ENCODE measurements at regions of chr16 and their contacts with region 1.

Region 1: GRCh38 chr16:11255737-11256660 is at the start of gene SOCS1:
- DNase-seq: peak; percentile 66
- H3K4me3 ChIP-seq: peak within 1 kb of the TSS; percentile 97
- H3K27ac ChIP-seq: peak within 1 kb of the TSS; percentile 97
- H3K27me3 ChIP-seq: peaks cover 2% of the 10 kb centered on the region
- CTCF ChIP-seq: peak; percentile 64
- polyA plus RNA-seq, gene SOCS1: 11.6 and 21.9 TPM in 2 replicates

Region 2: DNA sequence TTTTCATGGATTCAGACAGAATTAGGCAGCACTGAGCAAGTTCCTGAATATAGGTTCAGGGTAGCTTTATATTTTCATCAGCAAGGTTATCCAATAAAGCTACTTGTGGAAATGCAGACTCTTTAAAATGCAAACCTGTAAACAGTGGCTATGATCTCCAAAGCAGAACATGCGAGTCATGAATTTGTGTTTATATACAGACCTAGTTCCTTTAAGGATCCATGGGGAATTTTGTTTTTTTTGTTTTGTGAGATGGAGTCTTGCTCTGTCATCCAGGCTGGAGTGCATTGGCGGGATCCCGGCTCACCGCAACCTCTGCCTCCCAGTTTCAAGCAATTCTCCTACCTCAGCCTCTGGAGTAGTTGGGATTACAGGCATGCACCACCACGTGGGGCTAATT is 296.8 kb before region 1 on chr16:
- CTCF ChIA-PET with region 1: interaction called, 92 read pairs
- POLR2A ChIA-PET with region 1: interaction called, 39 read pairs
- DNase-seq: no peak
- H3K4me3 ChIP-seq: no peak overlapping the region
- H3K27ac ChIP-seq: peak overlapping the region; percentile 47
- H3K27me3 ChIP-seq: no peaks in the 10 kb centered on the region
- CTCF ChIP-seq: no peak

Region 3: GRCh38 chr16:10982465-10983150 is 273.4 kb before region 1 on chr16:
- CTCF ChIA-PET with region 1: interaction called, 10 read pairs
- POLR2A ChIA-PET with region 1: interaction called, 16 read pairs
- DNase-seq: no peak
- H3K4me3 ChIP-seq: no peak overlapping the region
- H3K27ac ChIP-seq: no peak overlapping the region
- H3K27me3 ChIP-seq: no peaks in the 10 kb centered on the region
- CTCF ChIP-seq: no peak

Region 4: DNA sequence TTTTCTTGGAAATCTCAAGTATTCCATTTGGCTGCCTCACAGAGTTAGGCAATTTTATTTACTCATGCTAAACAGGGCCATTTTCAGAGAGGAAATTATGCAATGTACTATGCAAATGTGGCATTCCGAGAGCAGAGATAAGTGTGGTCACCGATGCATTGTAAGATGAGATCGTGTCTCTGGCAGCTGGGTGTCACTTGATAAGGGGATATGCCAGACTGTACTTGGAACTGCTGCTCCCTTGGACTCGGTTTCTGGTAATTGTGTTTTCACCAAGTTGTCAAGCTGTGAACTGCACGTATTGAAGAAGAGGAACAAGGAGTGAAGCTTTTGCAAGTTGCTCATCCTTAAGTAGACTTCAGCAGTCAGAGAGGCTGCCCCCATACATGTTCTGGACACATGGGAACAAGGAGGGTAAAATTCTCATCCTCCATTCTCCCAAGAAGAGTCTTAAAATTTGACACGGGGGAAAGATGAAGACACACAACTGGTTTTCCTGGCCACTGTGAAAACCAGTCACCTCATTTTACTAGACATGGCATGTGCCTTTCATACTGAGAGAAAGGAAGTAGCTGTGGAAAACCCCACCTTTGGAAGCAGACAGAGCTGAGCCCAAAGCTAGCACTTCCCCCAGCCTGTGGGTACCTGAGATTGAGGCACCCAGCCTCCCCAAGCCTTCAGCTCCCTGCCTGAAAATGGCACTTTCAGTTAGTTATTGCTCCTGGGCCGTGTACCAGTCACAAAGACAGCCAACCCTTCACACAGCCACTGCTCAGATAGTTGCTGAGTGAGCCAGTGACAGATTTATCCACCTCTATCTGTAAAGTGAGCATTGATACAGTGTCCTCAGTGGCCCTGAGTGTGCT is 150.7 kb before region 1 on chr16:
- CTCF ChIA-PET with region 1: interaction called, 12 read pairs
- POLR2A ChIA-PET with region 1: interaction called, 11 read pairs
- DNase-seq: peak; percentile 87
- H3K4me3 ChIP-seq: no peak overlapping the region
- H3K27ac ChIP-seq: peak overlapping the region; percentile 94
- H3K27me3 ChIP-seq: no peaks in the 10 kb centered on the region
- CTCF ChIP-seq: no peak

Region 5: GRCh38 chr16:11224096-11224893 is 31.7 kb before region 1 on chr16:
- CTCF ChIA-PET with region 1: no interaction called
- POLR2A ChIA-PET with region 1: no interaction called
- DNase-seq: no peak
- H3K4me3 ChIP-seq: no peak overlapping the region
- H3K27ac ChIP-seq: no peak overlapping the region
- H3K27me3 ChIP-seq: no peaks in the 10 kb centered on the region
- CTCF ChIP-seq: no peak

Region 6: DNA sequence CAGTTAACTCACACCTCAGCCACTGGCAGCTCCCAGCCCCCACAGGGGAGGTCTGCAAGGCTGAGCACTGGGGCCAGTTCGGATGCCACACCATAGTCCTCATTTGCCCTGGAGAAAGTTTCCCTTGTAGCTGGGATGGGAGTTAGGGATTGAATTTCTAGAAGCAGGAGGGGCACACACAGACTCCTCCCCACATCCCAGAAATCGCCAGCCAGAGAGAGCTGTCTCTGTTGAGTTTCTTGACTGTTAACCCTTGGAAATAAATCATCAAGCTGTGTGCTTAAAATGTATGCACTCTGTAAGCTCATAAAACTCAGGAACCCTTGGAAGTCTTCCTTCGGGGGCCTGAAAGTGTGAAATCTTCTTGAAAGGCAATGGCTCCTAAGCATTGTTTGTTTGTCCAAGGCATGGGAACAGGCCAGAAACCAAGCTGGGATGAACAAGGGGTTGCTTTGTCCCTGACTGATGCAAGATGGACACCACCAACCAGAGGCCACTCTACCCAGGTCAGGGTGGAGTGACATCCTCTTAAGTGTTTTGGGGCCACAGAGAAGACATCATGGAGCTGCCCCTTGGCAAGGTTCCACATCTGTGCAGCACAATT is 17.8 kb after region 1 on chr16:
- CTCF ChIA-PET with region 1: interaction called, 14 read pairs
- POLR2A ChIA-PET with region 1: no interaction called
- DNase-seq: no peak
- H3K4me3 ChIP-seq: no peak overlapping the region
- H3K27ac ChIP-seq: no peak overlapping the region
- H3K27me3 ChIP-seq: peaks cover 13% of the 10 kb centered on the region
- CTCF ChIP-seq: no peak

Region 7: GRCh38 chr16:11356573-11357331 is 100.8 kb after region 1 on chr16:
- CTCF ChIA-PET with region 1: interaction called, 53 read pairs
- POLR2A ChIA-PET with region 1: interaction called, 15 read pairs
- DNase-seq: no peak
- H3K4me3 ChIP-seq: no peak overlapping the region
- H3K27ac ChIP-seq: no peak overlapping the region
- H3K27me3 ChIP-seq: no peaks in the 10 kb centered on the region
- CTCF ChIP-seq: peak; percentile 79

Region 8: GRCh38 chr16:11619327-11619851 is 363.4 kb after region 1 on chr16:
- CTCF ChIA-PET with region 1: no interaction called
- POLR2A ChIA-PET with region 1: no interaction called
- DNase-seq: no peak
- H3K4me3 ChIP-seq: no peak overlapping the region
- H3K27ac ChIP-seq: no peak overlapping the region
- H3K27me3 ChIP-seq: no peaks in the 10 kb centered on the region
- CTCF ChIP-seq: no peak